Esophagus muscularis mucosa (tissue), 4 donors: ENCODE measurements at regions of chr13 and their contacts with region 1.

Region 1: GRCh38 chr13:99176309-99177276 is 24.1 kb upstream of the UBAC2 start:
- DNase-seq: peak; percentile 95
- H3K4me3 ChIP-seq: no peak overlapping the region
- H3K27ac ChIP-seq: no peak overlapping the region
- H3K4me1 ChIP-seq: peaks cover 0 to 7% (median 7%) of the 10 kb centered on the region in 4 donors
- H3K27me3 ChIP-seq: peaks cover 0 to 14% (median 0%) of the 10 kb centered on the region in 4 donors
- CTCF ChIP-seq: peak; percentile 78 to 89 (median 89)
- EP300 ChIP-seq: no peak
- POLR2A ChIP-seq: no peak

Region 2: DNA sequence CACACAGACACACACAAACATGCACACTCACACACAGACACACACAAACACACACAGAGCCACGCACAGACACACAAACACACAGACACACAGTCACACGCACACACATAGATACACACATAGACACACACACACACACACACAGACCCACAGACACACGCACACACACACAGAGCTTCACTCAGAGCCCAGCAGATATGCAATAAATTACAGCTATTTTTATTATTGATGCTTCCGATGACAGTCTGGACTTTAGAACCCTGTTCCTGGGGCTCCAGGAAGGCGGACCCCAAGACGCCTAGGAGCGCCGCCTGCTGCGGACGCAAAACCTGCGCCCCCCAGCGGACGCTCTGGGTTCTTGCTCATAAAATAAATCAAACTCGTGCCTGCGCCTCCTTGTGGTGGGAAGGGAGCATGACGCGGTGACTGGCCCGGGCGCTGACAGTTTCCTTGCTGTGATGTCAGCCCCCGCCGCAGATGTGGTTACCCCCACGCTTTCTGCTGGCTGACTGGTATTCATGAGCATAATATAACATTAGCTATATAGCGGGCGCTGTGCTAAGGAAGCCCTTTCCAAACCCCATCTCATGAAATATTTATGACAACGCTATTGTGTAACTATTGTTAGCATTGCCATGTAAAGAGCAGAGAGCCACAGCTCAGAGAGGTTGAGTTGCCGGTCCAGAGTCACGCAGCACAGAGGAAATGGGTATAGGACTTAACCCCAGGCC is 260.3 kb after region 1 on chr13:
- intact Hi-C with region 1: loop called (anchors 2 kb)
- DNase-seq: peak; percentile 98
- H3K4me3 ChIP-seq: peak overlapping the region in 2 of 4 donors; percentile 8 to 34
- H3K27ac ChIP-seq: no peak overlapping the region
- H3K4me1 ChIP-seq: peaks cover 0 to 28% (median 23%) of the 10 kb centered on the region in 4 donors
- H3K27me3 ChIP-seq: peaks cover 0 to 11% (median 0%) of the 10 kb centered on the region in 4 donors
- CTCF ChIP-seq: peak in 2 of 3 experiments; percentile 100
- EP300 ChIP-seq: no peak
- POLR2A ChIP-seq: no peak